HepG2 (cell line): ENCODE measurements at regions of chr20 and their contacts with region 1.

Region 1: DNA sequence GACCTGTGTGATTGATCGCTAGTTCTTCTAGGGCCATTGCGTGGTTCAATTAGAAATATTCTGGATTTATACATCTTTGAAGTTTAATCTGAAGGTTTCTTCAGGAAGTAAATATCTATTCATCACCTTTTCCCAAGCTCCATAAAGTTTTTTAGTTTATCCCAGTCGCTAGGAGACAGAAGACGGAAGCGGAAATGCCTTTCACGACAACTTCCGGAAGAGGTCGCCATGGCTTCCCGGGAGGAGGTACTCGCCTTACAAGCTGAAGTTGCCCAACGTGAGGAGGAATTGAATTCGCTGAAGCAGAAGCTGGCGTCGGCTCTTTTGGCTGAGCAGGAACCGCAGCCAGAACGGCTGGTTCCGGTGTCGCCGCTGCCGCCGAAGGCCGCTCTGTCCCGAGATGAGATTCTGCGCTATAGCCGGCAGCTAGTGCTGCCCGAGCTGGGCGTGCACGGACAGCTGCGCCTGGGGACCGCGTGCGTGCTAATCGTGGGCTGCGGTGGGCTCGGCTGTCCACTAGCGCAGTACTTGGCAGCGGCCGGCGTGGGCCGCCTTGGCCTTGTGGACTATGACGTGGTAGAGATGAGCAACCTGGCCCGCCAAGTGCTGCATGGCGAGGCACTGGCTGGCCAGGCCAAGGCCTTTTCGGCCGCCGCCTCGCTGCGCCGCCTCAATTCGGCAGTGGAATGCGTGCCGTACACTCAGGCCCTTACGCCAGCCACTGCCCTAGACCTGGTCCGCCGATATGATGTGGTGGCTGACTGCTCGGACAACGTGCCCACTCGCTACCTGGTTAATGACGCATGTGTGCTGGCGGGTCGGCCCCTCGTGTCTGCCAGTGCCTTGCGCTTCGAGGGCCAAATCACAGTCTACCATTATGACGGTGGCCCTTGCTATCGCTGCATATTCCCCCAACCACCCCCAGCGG is at the start of gene MOCS3:
- DNase-seq: peak; percentile 97
- ATAC-seq: peak; percentile 84
- H3K4me3 ChIP-seq: peak within 1 kb of the TSS; percentile 85 to 97 (median 97)
- H3K27ac ChIP-seq: peak within 1 kb of the TSS; percentile 86
- H3K4me1 ChIP-seq: peaks cover 44% of the 10 kb centered on the region
- H3K27me3 ChIP-seq: no peaks in the 10 kb centered on the region; a peak in 1 of 5 replicates
- CTCF ChIP-seq: peak; percentile 14; the same call in 1 of the 2 replicates
- EP300 ChIP-seq: no peak
- POLR2A ChIP-seq: peak; percentile 55 to 82
- RAD21 ChIP-seq: 0 out of 2 replicates have a peak, but pooled peaks have one; percentile 42
- total RNA-seq, gene MOCS3: 8.4 and 9.7 TPM in 2 replicates

Region 2: GRCh38 chr20:50819349-50819748 is 139.5 kb before region 1 on chr20:
- CTCF ChIA-PET with region 1: interaction called, 7 read pairs
- POLR2A ChIA-PET with region 1: interaction called, 28 read pairs
- in situ Hi-C with region 1: no loop called
- intact Hi-C with region 1: loop called (anchors 1 kb)
- DNase-seq: no peak
- ATAC-seq: no peak
- H3K4me3 ChIP-seq: no peak overlapping the region
- H3K27ac ChIP-seq: no peak overlapping the region
- H3K4me1 ChIP-seq: peaks cover 25% of the 10 kb centered on the region
- H3K27me3 ChIP-seq: no peaks in the 10 kb centered on the region
- CTCF ChIP-seq: no peak
- EP300 ChIP-seq: no peak
- POLR2A ChIP-seq: no peak
- RAD21 ChIP-seq: no peak

Region 3: GRCh38 chr20:50876063-50876685 is 82.7 kb before region 1 on chr20:
- CTCF ChIA-PET with region 1: no interaction called
- POLR2A ChIA-PET with region 1: no interaction called
- in situ Hi-C with region 1: no loop called
- intact Hi-C with region 1: no loop called
- DNase-seq: no peak
- ATAC-seq: no peak
- H3K4me3 ChIP-seq: no peak overlapping the region
- H3K27ac ChIP-seq: no peak overlapping the region
- H3K4me1 ChIP-seq: peaks cover 36% of the 10 kb centered on the region
- H3K27me3 ChIP-seq: no peaks in the 10 kb centered on the region
- CTCF ChIP-seq: no peak
- EP300 ChIP-seq: no peak
- POLR2A ChIP-seq: no peak
- RAD21 ChIP-seq: no peak

Region 4: DNA sequence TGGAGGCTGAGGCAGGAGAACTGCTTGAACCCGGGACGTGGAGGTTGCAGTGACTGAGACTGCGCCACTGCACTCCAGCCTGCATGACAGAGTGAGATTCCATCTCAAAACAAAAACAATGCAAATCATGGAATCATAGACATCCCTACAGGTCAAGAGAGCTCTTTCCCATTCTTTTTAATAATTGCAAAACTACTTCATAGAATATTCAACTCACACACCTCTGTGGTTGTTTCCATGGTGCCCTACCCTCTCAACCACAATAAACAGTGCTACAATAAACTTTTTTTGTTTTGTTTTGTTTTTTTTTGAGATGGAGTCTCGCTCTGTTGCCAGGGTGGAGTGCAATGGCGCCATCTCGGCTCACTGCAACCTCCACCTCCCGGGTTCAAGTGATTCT is 15.8 kb before region 1 on chr20:
- CTCF ChIA-PET with region 1: no interaction called
- POLR2A ChIA-PET with region 1: interaction called, 10 read pairs
- in situ Hi-C with region 1: no loop called
- intact Hi-C with region 1: no loop called
- DNase-seq: no peak
- ATAC-seq: no peak
- H3K4me3 ChIP-seq: no peak overlapping the region
- H3K27ac ChIP-seq: no peak overlapping the region
- H3K4me1 ChIP-seq: no peaks in the 10 kb centered on the region
- H3K27me3 ChIP-seq: no peaks in the 10 kb centered on the region
- CTCF ChIP-seq: no peak
- EP300 ChIP-seq: no peak
- POLR2A ChIP-seq: no peak
- RAD21 ChIP-seq: no peak